MCF 10A (cell line): ENCODE measurements at regions of chr6 and their contacts with region 1.

Region 1: DNA sequence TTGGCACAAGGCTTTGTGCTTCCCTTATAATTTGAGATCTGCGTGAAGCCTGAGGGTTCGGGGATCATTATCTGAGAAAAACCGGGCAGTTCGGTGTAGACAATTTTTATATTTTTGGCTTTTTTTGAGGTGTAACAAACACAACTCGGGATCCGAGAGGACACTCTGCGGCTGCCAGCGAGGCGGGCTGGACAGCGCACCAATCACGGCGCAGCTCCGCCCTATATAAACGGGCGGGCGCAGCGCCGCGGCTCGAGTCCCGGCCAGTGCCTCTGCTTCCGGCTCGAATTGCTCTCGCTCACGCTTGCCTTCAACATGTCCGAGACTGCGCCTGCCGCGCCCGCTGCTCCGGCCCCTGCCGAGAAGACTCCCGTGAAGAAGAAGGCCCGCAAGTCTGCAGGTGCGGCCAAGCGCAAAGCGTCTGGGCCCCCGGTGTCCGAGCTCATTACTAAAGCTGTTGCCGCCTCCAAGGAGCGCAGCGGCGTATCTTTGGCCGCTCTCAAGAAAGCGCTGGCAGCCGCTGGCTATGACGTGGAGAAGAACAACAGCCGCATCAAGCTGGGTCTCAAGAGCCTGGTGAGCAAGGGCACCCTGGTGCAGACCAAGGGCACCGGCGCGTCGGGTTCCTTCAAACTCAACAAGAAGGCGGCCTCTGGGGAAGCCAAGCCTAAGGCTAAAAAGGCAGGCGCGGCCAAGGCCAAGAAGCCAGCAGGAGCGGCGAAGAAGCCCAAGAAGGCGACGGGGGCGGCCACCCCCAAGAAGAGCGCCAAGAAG is 69.0 kb downstream of the HFE start:
- DNase-seq: peak; percentile 91
- H3K4me3 Mint-ChIP-seq: peak overlapping the region; percentile 82
- H3K27ac Mint-ChIP-seq: peak overlapping the region; percentile 64
- H3K4me1 Mint-ChIP-seq: peaks cover 23% of the 10 kb centered on the region
- H3K27me3 Mint-ChIP-seq: no peaks in the 10 kb centered on the region
- CTCF ChIP-seq: no peak

Region 2: GRCh38 chr6:26031595-26032339 is 124.5 kb before region 1 on chr6:
- CTCF ChIA-PET with region 1: interaction called, 3 read pairs
- POLR2A ChIA-PET with region 1: interaction called, 291 read pairs
- intact Hi-C with region 1: loop called (anchors 2 kb)
- DNase-seq: peak; percentile 99
- H3K4me3 Mint-ChIP-seq: peak overlapping the region; percentile 81
- H3K27ac Mint-ChIP-seq: peak overlapping the region; percentile 97
- H3K4me1 Mint-ChIP-seq: peaks cover 25% of the 10 kb centered on the region
- H3K27me3 Mint-ChIP-seq: no peaks in the 10 kb centered on the region
- CTCF ChIP-seq: peak; percentile 12

Region 3: GRCh38 chr6:26136321-26136720 is 19.9 kb before region 1 on chr6:
- CTCF ChIA-PET with region 1: no interaction called
- POLR2A ChIA-PET with region 1: interaction called, 1,660 read pairs
- intact Hi-C with region 1: no loop called
- DNase-seq: no peak
- H3K4me3 Mint-ChIP-seq: no peak overlapping the region
- H3K27ac Mint-ChIP-seq: no peak overlapping the region
- H3K4me1 Mint-ChIP-seq: peaks cover 24% of the 10 kb centered on the region
- H3K27me3 Mint-ChIP-seq: no peaks in the 10 kb centered on the region
- CTCF ChIP-seq: no peak

Region 4: DNA sequence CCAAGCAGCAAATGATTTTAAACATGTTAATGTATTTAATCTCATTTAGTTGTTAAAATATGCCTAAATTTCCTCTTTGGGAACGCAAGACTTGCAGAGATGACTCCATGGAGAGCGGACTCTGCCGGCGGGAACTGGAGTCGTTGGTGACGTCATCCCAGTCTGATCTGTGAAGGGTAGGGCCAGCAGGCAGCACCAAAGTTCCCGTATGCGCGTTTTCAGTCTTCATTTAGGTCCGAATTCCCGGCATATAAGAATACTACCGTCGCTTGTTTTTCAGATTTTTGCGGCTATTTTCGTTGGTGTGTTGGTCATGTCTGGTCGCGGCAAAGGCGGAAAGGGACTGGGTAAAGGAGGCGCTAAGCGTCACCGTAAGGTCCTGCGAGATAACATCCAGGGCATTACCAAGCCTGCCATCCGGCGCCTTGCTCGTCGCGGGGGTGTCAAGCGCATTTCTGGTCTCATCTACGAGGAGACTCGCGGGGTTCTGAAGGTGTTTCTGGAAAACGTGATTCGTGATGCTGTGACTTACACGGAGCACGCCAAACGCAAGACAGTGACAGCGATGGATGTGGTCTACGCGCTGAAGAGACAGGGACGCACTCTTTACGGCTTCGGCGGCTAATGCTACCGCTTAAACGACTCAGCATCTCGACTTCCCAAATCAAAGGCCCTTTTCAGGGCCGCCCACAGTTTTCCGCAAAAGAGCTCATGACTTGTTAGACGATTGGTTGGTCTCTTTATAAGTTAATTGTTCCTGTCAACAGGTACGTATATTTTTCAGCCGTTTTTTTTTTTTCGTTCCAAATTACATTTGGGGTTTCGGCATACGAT is 48.3 kb after region 1 on chr6:
- CTCF ChIA-PET with region 1: no interaction called
- POLR2A ChIA-PET with region 1: interaction called, 1,160 read pairs
- intact Hi-C with region 1: loop called (anchors 1 kb)
- DNase-seq: peak; percentile 98
- H3K4me3 Mint-ChIP-seq: no peak overlapping the region
- H3K27ac Mint-ChIP-seq: no peak overlapping the region
- H3K4me1 Mint-ChIP-seq: peaks cover 3% of the 10 kb centered on the region
- H3K27me3 Mint-ChIP-seq: no peaks in the 10 kb centered on the region
- CTCF ChIP-seq: no peak

Region 5: GRCh38 chr6:26285143-26286134 is 129.2 kb after region 1 on chr6:
- CTCF ChIA-PET with region 1: no interaction called
- POLR2A ChIA-PET with region 1: interaction called, 71 read pairs
- intact Hi-C with region 1: no loop called
- DNase-seq: peak; percentile 100
- H3K4me3 Mint-ChIP-seq: peak overlapping the region; percentile 91
- H3K27ac Mint-ChIP-seq: peak overlapping the region; percentile 92
- H3K4me1 Mint-ChIP-seq: peaks cover 10% of the 10 kb centered on the region
- H3K27me3 Mint-ChIP-seq: no peaks in the 10 kb centered on the region
- CTCF ChIP-seq: no peak

Region 6: DNA sequence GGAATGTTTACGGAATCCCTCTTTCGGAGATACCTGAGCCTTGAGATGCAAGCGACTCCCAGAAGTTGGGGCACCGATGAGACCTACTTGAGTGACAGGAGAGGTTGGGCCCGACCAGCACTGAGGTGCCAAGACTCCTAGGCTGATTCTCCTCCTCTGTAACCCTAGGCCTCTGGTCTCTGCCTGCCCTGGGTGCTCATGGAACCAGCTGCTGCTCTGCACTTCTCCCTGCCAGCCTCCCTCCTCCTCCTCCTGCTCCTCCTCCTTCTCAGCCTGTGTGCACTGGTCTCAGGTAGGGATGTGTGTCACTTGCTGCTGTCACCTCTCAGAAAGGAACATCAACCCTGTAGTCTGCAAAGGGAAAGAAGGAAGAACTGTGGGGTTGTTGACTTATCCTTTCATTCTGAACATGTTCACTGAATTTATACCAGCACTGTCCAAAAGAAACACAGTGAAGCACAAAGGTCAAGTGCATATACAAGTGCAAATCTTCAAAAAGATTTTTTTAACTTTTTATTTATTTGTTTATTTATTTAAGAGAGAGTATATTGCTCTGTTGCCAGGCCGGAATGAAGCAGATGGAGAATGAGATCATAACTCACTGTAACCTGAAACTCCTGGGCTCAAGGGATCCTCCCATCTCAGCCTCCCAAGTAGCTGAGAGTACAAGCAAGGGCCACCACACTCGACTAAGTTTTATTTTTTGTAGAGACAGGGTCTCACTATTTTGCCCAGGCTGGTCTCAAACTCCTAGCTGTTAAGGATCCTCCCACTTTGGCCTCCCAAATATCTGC is 227.6 kb after region 1 on chr6:
- CTCF ChIA-PET with region 1: no interaction called
- POLR2A ChIA-PET with region 1: no interaction called
- intact Hi-C with region 1: no loop called
- DNase-seq: peak; percentile 73
- H3K4me3 Mint-ChIP-seq: peak overlapping the region; percentile 88
- H3K27ac Mint-ChIP-seq: peak overlapping the region; percentile 92
- H3K4me1 Mint-ChIP-seq: peaks cover 35% of the 10 kb centered on the region
- H3K27me3 Mint-ChIP-seq: no peaks in the 10 kb centered on the region
- CTCF ChIP-seq: no peak

Region 7: DNA sequence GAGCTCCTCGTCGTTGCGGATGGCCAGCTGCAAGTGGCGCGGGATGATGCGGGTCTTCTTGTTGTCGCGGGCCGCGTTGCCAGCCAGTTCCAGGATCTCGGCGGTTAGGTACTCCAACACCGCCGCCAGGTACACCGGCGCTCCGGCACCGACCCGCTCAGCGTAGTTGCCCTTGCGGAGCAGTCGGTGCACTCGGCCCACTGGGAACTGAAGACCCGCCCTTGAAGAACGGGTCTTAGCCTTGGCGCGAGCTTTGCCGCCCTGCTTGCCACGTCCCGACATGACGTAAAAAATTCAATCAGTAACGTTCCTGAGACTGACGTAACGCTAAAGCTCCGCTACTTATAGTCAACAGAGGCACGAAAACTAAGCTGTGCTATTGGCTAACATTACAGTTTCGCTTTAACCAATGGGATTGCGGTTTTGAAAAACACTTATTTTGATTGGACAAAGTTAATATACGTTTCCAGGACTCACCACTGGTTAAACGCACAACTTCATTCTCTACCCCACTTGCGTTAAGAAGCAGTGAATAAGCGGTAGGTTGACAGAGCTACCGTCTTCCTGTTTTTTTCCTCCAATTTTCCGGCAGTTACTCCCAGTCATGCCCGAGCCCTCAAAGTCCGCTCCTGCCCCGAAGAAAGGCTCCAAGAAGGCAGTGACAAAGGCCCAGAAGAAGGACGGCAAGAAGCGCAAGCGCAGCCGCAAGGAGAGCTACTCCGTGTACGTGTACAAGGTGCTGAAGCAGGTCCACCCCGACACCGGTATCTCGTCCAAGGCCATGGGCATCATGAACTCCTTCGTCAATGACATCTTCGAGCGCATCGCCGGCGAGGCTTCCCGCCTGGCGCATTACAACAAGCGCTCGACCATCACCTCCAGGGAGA is 1682.0 kb after region 1 on chr6:
- CTCF ChIA-PET with region 1: no interaction called
- POLR2A ChIA-PET with region 1: interaction called, 117 read pairs
- intact Hi-C with region 1: no loop called
- DNase-seq: peak; percentile 98
- H3K4me3 Mint-ChIP-seq: no peak overlapping the region
- H3K27ac Mint-ChIP-seq: no peak overlapping the region
- H3K4me1 Mint-ChIP-seq: peaks cover 32% of the 10 kb centered on the region
- H3K27me3 Mint-ChIP-seq: no peaks in the 10 kb centered on the region
- CTCF ChIP-seq: no peak